Activated naive CD4-positive, alpha-beta T cell treated with anti-CD3 and anti-CD28 coated beads for 36 hours (primary cell): ENCODE measurements at regions of chr3 and their contacts with region 1.

Region 1: DNA sequence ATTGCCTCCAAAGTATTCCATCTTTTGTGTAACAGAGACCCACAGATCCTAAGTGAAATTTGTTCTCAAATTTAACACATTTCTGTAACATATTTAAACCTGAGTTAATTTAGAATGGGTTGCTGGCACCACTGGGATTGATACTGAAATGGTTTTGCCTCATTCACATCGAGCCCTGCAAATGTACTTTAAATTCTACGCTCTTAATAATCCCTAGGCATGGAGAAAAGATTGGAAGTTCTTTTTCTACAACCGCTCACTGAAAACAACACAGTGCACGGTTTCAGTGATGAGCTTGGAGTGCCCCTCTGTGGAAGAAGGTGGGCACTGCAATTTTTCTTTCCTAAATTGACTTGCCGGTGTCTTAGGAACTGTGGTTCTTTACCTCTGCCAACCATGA is 109.9 kb upstream of the ATP11B start:
- DNase-seq: peak; percentile 80
- H3K4me3 Mint-ChIP-seq: peak overlapping the region; percentile 66
- H3K27ac Mint-ChIP-seq: no peak overlapping the region
- H3K4me1 Mint-ChIP-seq: peaks cover 8% of the 10 kb centered on the region
- H3K27me3 Mint-ChIP-seq: peaks cover 16% of the 10 kb centered on the region

Region 2: DNA sequence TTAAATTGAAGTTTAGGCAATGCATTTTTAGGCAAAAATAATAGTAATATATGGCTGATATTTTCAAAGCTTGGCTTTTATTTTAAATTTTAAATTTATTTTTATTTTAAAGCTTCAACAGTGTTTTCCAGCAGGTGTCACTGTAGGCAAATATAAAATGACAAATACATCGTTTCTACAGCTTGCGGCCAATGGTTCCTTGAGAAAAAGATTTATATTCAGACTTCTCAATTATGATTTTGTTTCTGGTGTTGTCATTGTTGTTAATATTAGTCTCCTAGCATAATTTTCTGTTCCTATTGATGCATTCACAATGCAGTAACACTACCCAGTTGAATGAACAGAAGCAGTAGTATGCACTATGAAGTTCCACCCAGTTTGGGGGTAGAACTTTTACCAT is 1473.2 kb before region 1 on chr3:
- CTCF ChIA-PET with region 1: no interaction called
- intact Hi-C with region 1: loop called (anchors 1 kb)
- DNase-seq: no peak
- H3K4me3 Mint-ChIP-seq: no peak overlapping the region
- H3K27ac Mint-ChIP-seq: no peak overlapping the region
- H3K4me1 Mint-ChIP-seq: no peaks in the 10 kb centered on the region
- H3K27me3 Mint-ChIP-seq: peaks cover 4% of the 10 kb centered on the region

Region 3: GRCh38 chr3:181709537-181710279 is 973.7 kb before region 1 on chr3:
- CTCF ChIA-PET with region 1: interaction called, 5 read pairs
- intact Hi-C with region 1: loop called (anchors 1 kb)
- DNase-seq: peak; percentile 82
- H3K4me3 Mint-ChIP-seq: no peak overlapping the region
- H3K27ac Mint-ChIP-seq: no peak overlapping the region
- H3K4me1 Mint-ChIP-seq: peaks cover 10% of the 10 kb centered on the region
- H3K27me3 Mint-ChIP-seq: peaks cover 54% of the 10 kb centered on the region

Region 4: GRCh38 chr3:182248351-182248880 is 435.0 kb before region 1 on chr3:
- CTCF ChIA-PET with region 1: no interaction called
- intact Hi-C with region 1: loop called (anchors 5 kb)
- DNase-seq: no peak
- H3K4me3 Mint-ChIP-seq: no peak overlapping the region
- H3K27ac Mint-ChIP-seq: no peak overlapping the region
- H3K4me1 Mint-ChIP-seq: no peaks in the 10 kb centered on the region
- H3K27me3 Mint-ChIP-seq: no peaks in the 10 kb centered on the region

Region 5: GRCh38 chr3:182414586-182414985 is 268.9 kb before region 1 on chr3:
- CTCF ChIA-PET with region 1: no interaction called
- intact Hi-C with region 1: no loop called
- DNase-seq: no peak
- H3K4me3 Mint-ChIP-seq: no peak overlapping the region
- H3K27ac Mint-ChIP-seq: no peak overlapping the region
- H3K4me1 Mint-ChIP-seq: no peaks in the 10 kb centered on the region
- H3K27me3 Mint-ChIP-seq: peaks cover 1% of the 10 kb centered on the region

Region 6: DNA sequence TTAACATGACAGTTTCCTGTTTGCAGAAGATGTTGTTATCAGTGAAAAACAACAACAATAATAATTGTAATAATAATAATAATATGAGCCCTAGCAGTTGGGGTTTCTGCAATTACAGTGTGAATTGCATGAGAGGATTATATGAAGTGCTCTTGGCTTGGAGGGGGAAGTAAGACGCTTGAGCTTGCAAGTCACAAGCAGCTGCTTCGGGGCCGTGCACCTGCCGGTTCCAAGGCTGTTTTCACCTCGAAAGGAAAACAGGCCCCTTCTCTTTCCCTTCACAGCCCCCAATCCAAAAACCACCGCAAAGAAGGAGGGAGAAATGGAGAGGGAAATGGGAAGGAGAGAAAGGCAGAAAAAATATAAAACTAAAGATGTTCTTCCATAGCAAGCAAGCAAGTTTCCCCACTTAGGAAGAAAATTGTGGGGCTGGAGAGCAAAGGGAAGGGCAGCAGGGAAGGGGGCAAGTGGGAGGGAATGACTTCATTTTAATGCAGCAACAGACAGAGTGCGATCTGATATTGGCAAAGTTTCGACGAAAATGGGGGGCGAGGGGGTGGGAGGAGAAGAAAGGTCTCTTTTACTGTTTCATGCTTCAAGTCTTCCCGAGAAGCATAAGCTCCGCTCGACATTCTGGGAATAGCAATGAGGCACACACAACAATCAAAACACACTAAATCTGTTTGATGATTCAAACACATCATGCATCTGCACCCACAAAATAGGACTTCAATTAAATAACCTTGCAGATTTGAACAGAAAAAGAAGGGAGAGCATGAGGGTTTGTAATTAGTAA is 174.3 kb before region 1 on chr3:
- CTCF ChIA-PET with region 1: no interaction called
- intact Hi-C with region 1: loop called (anchors 10 kb)
- DNase-seq: no peak
- H3K4me3 Mint-ChIP-seq: no peak overlapping the region
- H3K27ac Mint-ChIP-seq: no peak overlapping the region
- H3K4me1 Mint-ChIP-seq: no peaks in the 10 kb centered on the region
- H3K27me3 Mint-ChIP-seq: no peaks in the 10 kb centered on the region

Region 7: GRCh38 chr3:182704926-182705325 is 21.5 kb after region 1 on chr3:
- CTCF ChIA-PET with region 1: no interaction called
- intact Hi-C with region 1: no loop called
- DNase-seq: no peak
- H3K4me3 Mint-ChIP-seq: no peak overlapping the region
- H3K27ac Mint-ChIP-seq: no peak overlapping the region
- H3K4me1 Mint-ChIP-seq: no peaks in the 10 kb centered on the region
- H3K27me3 Mint-ChIP-seq: peaks cover 6% of the 10 kb centered on the region